Naive thymus-derived CD8-positive, alpha-beta T cell (primary cell): ENCODE measurements at regions of chr1 and their contacts with region 1.

Region 1: GRCh38 chr1:26279456-26280332 is at the start of gene SH3BGRL3:
- DNase-seq: peak; percentile 73 to 89 (median 82)
- ATAC-seq: peak; percentile 66 to 70
- H3K4me3 Mint-ChIP-seq: peak within 1 kb of the TSS; percentile 86 to 95 (median 93)
- H3K27ac Mint-ChIP-seq: peak within 1 kb of the TSS; percentile 93 to 100 (median 96)
- H3K4me1 Mint-ChIP-seq: peaks cover 46 to 89% (median 87%) of the 10 kb centered on the region in 4 donors
- H3K27me3 Mint-ChIP-seq: no peaks in the 10 kb centered on the region
- polyA plus RNA-seq, gene SH3BGRL3: 805 to 925 (median 916) TPM

Region 2: GRCh38 chr1:26306290-26307229 is 26.9 kb after region 1 on chr1 and contains the start of gene UBXN11:
- POLR2A ChIA-PET with region 1: interaction called, 2,161 read pairs
- DNase-seq: peak; percentile 79 to 97 (median 90)
- ATAC-seq: peak; percentile 94 to 97
- H3K4me3 Mint-ChIP-seq: peak within 1 kb of the TSS; percentile 90 to 100 (median 98)
- H3K27ac Mint-ChIP-seq: peak within 1 kb of the TSS; percentile 91 to 100 (median 98)
- H3K4me1 Mint-ChIP-seq: peaks cover 20 to 37% (median 33%) of the 10 kb centered on the region in 4 donors
- H3K27me3 Mint-ChIP-seq: no peaks in the 10 kb centered on the region
- polyA plus RNA-seq, gene UBXN11: 9.1 to 14.7 (median 12.4) TPM

Region 3: DNA sequence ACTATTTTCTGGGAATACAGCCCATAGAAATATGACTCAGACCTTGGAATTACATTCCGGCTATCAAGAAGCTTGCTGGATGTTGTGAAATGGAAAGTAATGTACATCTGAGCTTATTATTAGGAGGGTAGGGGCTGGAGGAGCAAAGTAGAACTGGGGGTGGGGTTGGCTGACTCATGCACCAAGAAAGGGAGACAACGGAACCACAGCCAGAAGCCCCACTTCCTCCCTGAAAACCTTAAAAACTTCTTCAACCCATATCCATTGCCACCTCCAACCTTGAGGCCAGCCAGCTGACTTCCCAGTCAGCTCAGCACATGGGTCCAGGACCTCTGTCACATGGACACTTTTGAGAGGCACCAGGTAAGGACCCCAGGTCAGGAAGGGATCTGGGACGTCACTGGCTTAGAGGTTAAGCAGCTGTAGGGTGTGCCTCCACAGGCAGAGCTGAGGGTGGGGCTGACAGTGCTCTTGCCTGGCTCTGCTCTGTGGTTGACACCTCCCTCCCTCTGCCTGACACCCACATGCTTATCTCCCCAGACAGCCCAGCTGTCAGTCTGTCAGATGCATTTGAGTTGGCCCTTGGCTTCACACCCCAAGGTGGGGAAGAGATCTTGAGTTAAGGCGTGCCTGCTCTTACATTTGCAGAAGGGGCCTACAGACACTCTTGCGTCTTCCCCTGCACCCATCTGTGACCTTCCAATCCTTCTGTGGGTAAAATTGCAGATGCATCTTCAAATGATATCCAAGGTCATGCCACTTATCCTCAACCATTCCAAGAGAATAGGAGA is 98.6 kb after region 1 on chr1:
- POLR2A ChIA-PET with region 1: interaction called, 24 read pairs
- DNase-seq: peak in 9 of 10 donors; percentile 33 to 87 (median 71)
- ATAC-seq: peak; percentile 93 to 98
- H3K4me3 Mint-ChIP-seq: peak overlapping the region; percentile 65 to 84 (median 74)
- H3K27ac Mint-ChIP-seq: peak overlapping the region; percentile 66 to 94 (median 90)
- H3K4me1 Mint-ChIP-seq: peaks cover 40 to 74% (median 65%) of the 10 kb centered on the region in 4 donors
- H3K27me3 Mint-ChIP-seq: peaks cover 0 to 3% (median 0%) of the 10 kb centered on the region in 5 donors